Mucosa of descending colon (tissue), 3 donors: ENCODE measurements at regions of chr4 and their contacts with region 1.

Region 1: GRCh38 chr4:6327041-6327917 is 57.6 kb downstream of the WFS1 start:
- DNase-seq: peak; percentile 76 to 86 (median 80)
- ATAC-seq: peak; percentile 83
- H3K4me3 ChIP-seq: no peak overlapping the region
- H3K4me1 ChIP-seq: peaks cover 5% of the 10 kb centered on the region
- CTCF ChIP-seq: peak; percentile 89

Region 2: DNA sequence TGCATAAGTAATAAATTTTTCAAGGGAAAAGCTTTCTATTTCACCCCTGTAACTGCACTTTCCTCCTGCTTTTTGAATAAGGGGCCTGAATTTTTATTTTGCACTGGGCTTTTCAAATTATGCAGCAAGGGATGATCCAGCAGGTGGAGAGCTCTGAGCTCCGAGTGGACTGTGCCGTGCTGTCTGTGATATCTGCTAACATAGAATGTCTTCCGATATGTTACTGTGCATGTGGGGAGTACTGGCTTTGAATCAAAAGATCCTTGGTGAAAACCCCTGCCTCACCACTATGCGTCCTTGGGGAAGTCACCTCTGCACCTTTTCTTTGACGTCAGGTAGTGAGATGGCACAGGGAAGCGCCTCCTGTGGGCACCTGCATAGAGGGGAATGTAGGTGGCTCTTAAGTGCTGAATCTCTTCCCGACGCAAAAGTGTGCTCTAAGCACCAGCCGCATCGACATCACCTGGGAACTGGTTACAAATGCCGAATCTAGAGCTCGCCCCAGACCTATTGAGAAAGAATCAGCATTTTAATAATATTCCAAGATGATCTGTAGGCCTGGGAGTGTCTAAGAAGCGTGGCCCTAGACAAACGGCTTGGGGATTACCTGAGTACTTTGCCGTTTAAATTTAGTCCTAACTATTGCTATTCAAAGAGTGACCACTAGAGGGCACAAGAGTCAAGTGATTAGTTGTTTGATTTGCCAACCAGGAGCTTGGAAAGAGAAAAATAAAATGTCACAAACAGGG is 76.9 kb before region 1 on chr4:
- intact Hi-C with region 1: loop called (anchors 5 kb)
- DNase-seq: peak in 2 of 3 donors; percentile 16 to 61
- ATAC-seq: peak; percentile 76
- H3K4me3 ChIP-seq: no peak overlapping the region
- H3K4me1 ChIP-seq: no peaks in the 10 kb centered on the region
- CTCF ChIP-seq: peak; percentile 77